Gastrocnemius medialis (tissue), 4 donors: ENCODE measurements at regions of chr9 and their contacts with region 1.

Region 1: GRCh38 chr9:33290247-33291030 is at the start of gene NFX1:
- DNase-seq: peak; percentile 96 to 99
- ATAC-seq: peak; percentile 83 to 88
- H3K4me3 ChIP-seq: peak within 1 kb of the TSS; percentile 69 to 90 (median 76)
- H3K27ac ChIP-seq: peak within 1 kb of the TSS; percentile 93 to 100 (median 94)
- H3K4me1 ChIP-seq: peaks cover 48 to 52% of the 10 kb centered on the region in 2 donors
- H3K27me3 ChIP-seq: no peaks in the 10 kb centered on the region
- CTCF ChIP-seq: peak in 1 of 5 experiments; percentile 17
- POLR2A ChIP-seq: peak; percentile 87 to 89
- total RNA-seq, gene NFX1: 29.8 to 52.0 (median 40.6) TPM

Region 2: DNA sequence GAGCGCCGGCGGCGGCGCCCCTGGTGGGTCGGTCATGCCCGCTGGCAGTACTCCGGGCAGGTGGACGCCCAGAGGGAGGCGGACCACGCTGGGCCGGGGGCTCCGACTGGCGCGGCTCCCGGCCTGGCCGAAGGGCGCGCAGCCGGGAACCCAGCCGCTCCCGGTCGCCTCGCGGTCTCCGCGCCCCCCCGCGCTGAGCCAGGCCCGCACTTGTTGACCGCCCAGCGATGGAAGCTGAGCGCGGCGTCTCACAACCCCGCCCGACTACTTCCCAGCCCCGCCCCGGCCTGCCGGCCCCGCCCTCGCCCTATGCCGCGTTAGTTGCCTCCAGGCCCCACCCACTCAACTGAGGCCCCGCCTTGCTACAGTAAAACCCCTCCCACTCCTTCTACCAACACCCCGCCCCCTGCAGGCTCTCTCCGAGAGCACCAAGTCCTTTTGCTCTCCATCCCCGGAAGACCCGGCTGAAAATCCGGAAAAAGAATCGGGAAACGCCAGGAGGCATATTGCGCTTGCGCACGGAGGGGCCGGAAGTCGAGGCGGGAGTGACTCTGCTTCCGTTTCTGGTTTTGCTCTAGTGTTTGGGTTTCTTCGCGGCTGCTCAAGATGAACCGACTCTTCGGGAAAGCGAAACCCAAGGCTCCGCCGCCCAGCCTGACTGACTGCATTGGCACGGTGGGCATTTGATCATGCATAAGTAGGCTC is 25.8 kb before region 1 on chr9 and contains the starts of genes BAG1 and CHMP5:
- in situ Hi-C with region 1: no loop called
- intact Hi-C with region 1: loop called (anchors 1 kb)
- DNase-seq: peak; percentile 99 to 100
- ATAC-seq: peak; percentile 88 to 91
- H3K4me3 ChIP-seq: peak within 1 kb of the TSS; percentile 86 to 100 (median 90)
- H3K27ac ChIP-seq: peak within 1 kb of the TSS; percentile 96 to 100 (median 98)
- H3K4me1 ChIP-seq: peaks cover 17 to 20% of the 10 kb centered on the region in 2 donors
- H3K27me3 ChIP-seq: no peaks in the 10 kb centered on the region
- CTCF ChIP-seq: peak in 3 of 5 experiments; percentile 21 to 51 (median 48)
- POLR2A ChIP-seq: peak; percentile 98 to 99
- total RNA-seq, gene BAG1: 81.5 to 244 (median 158) TPM
- total RNA-seq, gene CHMP5: 42.8 to 50.7 (median 47.8) TPM

Region 3: GRCh38 chr9:33329117-33329563 is 38.7 kb after region 1 on chr9:
- in situ Hi-C with region 1: no loop called
- intact Hi-C with region 1: loop called (anchors 2 kb)
- DNase-seq: peak; percentile 85 to 86
- ATAC-seq: peak; percentile 98
- H3K4me3 ChIP-seq: no peak overlapping the region
- H3K27ac ChIP-seq: peak overlapping the region; percentile 80 to 84 (median 82)
- H3K4me1 ChIP-seq: peaks cover 19 to 23% of the 10 kb centered on the region in 2 donors
- H3K27me3 ChIP-seq: no peaks in the 10 kb centered on the region
- CTCF ChIP-seq: no peak
- POLR2A ChIP-seq: no peak

Region 4: GRCh38 chr9:33404788-33405362 is 114.4 kb after region 1 on chr9:
- in situ Hi-C with region 1: no loop called
- intact Hi-C with region 1: loop called (anchors 10 kb)
- DNase-seq: no peak
- ATAC-seq: no peak
- H3K4me3 ChIP-seq: no peak overlapping the region
- H3K27ac ChIP-seq: peak overlapping the region; percentile 4 to 48 (median 26)
- H3K4me1 ChIP-seq: peaks cover 24% of the 10 kb centered on the region in 2 donors
- H3K27me3 ChIP-seq: no peaks in the 10 kb centered on the region
- CTCF ChIP-seq: no peak
- POLR2A ChIP-seq: no peak

Region 5: GRCh38 chr9:33473643-33474352 is 183.4 kb after region 1 on chr9 and contains the start of gene NOL6:
- in situ Hi-C with region 1: loop called in 2 of 4 experiments (anchors 10 to 25 kb)
- intact Hi-C with region 1: loop called (anchors 5 kb)
- DNase-seq: peak; percentile 97 to 99
- ATAC-seq: peak; percentile 100
- H3K4me3 ChIP-seq: peak within 1 kb of the TSS; percentile 66 to 100 (median 84)
- H3K27ac ChIP-seq: peak within 1 kb of the TSS; percentile 80 to 86 (median 80)
- H3K4me1 ChIP-seq: peaks cover 11 to 12% of the 10 kb centered on the region in 2 donors
- H3K27me3 ChIP-seq: no peaks in the 10 kb centered on the region
- CTCF ChIP-seq: no peak
- POLR2A ChIP-seq: peak; percentile 62 to 74
- total RNA-seq, gene NOL6: 18.1 to 36.3 (median 29.1) TPM